AG04449 (cell line): ENCODE measurements at regions of chr5 and their contacts with region 1.

Region 1: GRCh38 chr5:38660194-38660668 is 103.8 kb upstream of the LIFR start:
- DNase-seq: no peak
- H3K4me3 ChIP-seq: no peak overlapping the region
- CTCF ChIP-seq: no peak

Region 2: DNA sequence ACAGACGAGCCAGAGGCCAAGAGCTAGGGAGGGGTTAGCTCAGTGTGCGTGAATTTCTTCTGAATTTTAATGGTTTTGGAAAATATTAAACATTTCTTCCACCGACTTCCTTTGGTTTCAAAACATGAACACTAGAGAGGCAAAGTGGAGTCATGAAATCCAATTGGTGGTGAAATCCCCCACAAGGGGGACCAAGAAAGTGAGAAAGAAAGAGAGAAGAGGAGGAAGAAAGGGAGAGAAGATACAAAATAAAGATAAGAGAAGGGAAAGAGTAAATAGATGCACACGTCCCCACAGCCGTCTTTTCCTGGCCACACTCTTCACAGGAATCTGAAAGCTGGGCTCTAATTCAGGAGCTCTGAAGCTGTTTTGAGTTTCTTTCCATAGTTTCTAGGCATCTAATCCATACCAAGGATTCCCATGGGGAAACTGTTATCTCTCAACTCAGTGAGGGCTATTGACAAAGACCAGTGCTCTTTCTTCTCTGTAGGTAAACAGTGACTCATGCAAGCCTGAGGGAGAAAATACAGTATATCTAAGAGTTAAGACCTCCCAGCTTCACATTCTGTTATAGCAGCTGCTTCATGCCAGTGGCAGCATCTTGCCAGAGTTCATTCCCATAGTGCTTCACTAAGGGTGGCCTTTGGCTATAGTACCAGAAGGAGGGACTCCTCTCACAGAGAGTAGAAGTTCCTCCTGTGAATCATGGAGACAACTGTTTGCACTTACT is 12.0 kb after region 1 on chr5:
- CTCF ChIA-PET with region 1: interaction called, 10 read pairs
- POLR2A ChIA-PET with region 1: no interaction called
- DNase-seq: peak; percentile 77
- H3K4me3 ChIP-seq: no peak overlapping the region
- CTCF ChIP-seq: no peak